ENCODE measurements at regions of chr22 and their contacts with region 1.

Region 1: DNA sequence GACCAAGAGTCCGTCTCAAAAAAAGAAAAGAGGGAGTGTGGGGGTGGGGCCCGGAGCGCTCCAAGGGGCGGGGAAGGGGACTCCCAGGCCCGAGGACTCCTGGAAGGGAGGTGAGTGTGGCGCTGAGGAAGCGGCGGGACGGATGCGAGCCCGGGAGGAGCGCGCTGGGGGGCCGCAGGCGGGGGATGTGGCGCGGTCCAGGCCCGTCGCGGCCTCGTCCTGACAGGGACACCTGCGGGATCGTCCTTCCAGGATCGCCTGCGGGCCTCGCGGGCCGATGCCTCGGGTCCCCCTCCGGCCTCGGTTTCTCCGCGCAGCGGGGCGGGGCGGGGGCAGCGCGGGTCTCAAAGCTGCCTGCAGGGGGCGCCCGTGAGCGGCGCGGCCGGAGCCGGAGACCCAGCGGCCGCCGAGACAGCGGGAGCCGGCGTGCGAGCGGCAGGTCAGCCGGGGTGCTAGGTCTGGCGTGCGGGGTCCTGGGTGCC is 3.8 kb upstream of the ADORA2A start:
- DNase-seq: no peak
- H3K4me3 ChIP-seq: peak overlapping the region; percentile 56 to 64
- H3K27ac ChIP-seq: no peak overlapping the region
- H3K4me1 ChIP-seq: no peaks in the 10 kb centered on the region
- H3K27me3 ChIP-seq: no peaks in the 10 kb centered on the region
- CTCF ChIP-seq: peak; percentile 62 to 94 (median 79)

Region 2: DNA sequence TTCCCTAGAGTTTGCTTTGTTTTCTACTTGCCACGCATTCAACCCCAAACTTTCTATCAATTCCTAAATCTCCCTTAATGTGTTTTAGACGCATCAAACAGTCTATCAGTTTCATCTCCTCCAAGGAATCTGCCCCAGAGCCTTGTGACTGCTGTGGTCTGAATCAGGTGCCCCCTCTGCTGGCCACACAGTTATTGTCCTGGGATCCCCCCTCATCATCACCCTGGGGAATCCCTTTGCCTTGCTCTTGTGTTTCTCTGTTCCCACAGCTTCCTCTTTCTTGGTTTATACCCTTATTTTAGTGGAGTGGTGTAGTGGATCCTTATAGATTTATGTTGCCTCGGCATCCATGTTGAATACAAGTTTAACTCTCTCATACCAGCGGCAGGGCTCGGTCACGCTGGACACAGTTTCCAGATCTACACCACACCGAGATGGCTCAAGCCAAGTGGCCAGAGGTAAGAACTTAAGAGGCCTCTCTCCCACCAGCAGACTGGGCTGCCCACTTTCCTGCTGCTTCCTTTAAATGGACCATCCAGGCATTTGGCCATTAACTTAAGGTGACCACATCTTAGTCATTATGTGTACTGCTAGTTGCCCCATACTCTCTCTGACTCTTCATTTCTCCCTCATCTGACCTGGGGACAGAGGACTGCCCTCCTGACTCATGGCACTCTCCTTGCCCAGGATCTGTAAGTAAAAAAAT is 79.7 kb after region 1 on chr22:
- intact Hi-C with region 1: loop called (anchors 5 kb)
- DNase-seq: no peak
- H3K4me3 ChIP-seq: no peak overlapping the region
- H3K27ac ChIP-seq: no peak overlapping the region
- H3K4me1 ChIP-seq: no peaks in the 10 kb centered on the region
- H3K27me3 ChIP-seq: no peaks in the 10 kb centered on the region
- CTCF ChIP-seq: peak; percentile 30 to 61 (median 45)

Region 3: DNA sequence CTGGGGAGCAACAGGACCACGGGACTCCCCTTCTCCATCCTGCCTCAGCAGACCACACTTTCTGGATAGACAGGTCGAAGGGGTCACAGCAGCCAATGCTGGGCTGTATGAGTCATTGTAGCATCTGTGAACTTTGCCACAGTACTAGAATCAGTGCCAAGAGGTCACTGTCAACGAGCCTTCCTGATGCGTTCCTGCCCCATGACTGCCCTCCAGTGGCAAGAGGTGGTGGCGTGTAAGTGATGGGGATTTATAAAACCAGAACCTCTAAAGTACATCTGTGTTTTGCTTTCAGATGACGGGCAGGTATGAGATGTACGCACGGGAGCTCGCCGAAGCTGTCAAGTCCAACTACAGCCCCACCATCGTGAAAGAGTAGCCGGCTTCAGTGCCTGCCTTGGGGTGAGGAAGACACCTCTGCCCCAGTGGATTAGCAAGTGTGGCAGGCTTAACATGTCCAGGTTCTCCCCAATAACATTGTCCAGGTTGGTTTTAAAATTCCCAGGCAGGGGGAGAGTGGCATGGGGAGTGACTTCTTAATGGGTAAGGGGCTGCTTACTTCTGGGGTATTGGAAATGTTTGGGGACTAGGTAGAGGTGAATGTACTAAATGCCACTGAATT is 102.0 kb after region 1 on chr22:
- intact Hi-C with region 1: loop called (anchors 2 kb)
- DNase-seq: peak in 1 of 2 donors; percentile 85
- H3K4me3 ChIP-seq: no peak overlapping the region
- H3K27ac ChIP-seq: peak overlapping the region in 1 of 2 donors; percentile 71
- H3K4me1 ChIP-seq: peaks cover 0 to 4% of the 10 kb centered on the region in 2 donors
- H3K27me3 ChIP-seq: no peaks in the 10 kb centered on the region
- CTCF ChIP-seq: peak; percentile 63 to 84 (median 74)

Region 4: DNA sequence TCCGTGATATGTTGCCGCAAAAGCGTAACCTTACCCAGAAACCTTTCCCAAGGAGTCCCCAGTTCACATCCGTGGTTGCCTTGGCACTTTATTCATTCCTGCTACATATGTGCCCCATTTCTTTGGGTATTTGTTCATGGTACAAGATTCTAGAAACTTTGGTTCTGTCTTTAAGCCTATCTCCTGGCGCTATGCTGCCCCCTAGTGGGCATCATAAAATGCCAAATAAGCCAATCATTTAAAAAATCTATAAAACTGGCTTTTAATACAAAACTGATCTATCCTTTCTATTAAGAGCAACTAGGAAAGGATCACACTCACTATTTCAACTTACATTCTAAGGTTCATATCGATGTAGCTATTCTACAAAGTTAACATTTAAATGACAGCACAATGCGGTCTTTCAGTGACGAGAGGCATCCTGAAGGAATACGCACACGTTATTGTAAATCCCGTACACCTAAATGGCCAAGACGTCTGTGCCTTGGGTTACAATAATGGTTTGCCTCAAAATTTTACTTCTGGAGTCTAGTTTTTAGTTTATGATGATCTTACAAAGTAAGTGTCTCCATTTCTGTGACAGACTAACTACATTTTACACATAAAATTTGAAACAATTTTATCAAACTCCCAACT is 334.7 kb after region 1 on chr22:
- intact Hi-C with region 1: loop called (anchors 10 kb)
- DNase-seq: peak in 1 of 2 donors; percentile 66
- H3K4me3 ChIP-seq: no peak overlapping the region
- H3K27ac ChIP-seq: no peak overlapping the region
- H3K4me1 ChIP-seq: no peaks in the 10 kb centered on the region
- H3K27me3 ChIP-seq: no peaks in the 10 kb centered on the region
- CTCF ChIP-seq: peak; percentile 66 to 82 (median 82)

Measured in ascending aorta (tissue), 2 donors.